ENCODE measurements at regions of chrX and their contacts with region 1.

Region 1: DNA sequence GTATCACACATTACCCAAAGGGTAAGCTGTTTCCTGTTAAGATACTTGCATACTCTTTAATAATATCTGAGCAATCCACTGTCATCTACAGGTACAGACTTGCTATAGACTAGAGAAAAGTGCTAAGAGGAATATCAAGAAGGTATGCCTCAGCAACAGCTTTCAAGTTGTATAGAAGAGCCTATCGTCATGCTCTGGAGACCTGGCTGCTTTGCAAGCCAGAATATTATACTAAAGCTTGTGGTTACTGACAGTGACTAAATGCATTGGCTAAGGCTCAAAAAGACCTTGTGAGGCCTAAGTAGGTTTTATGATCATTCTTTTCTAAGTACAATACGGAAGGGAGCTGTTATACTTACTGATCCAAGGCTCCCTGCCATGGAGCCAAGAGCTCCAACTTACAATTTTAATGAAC is 11.3 kb downstream of the LAMP2 start:
- DNase-seq: peak in 1 of 2 donors; percentile 30
- ATAC-seq: peak; percentile 53 to 77 (median 74)
- H3K4me3 ChIP-seq: no peak overlapping the region
- H3K4me3 Mint-ChIP-seq: peak overlapping the region; percentile 73
- H3K27ac ChIP-seq: no peak overlapping the region
- H3K27ac Mint-ChIP-seq: peak overlapping the region; percentile 54 to 73
- H3K4me1 ChIP-seq: peaks cover 8% of the 10 kb centered on the region
- H3K4me1 Mint-ChIP-seq: peaks cover 28 to 31% of the 10 kb centered on the region in 2 donors
- H3K27me3 ChIP-seq: no peaks in the 10 kb centered on the region
- H3K27me3 Mint-ChIP-seq: no peaks in the 10 kb centered on the region
- CTCF ChIP-seq: no peak

Region 2: DNA sequence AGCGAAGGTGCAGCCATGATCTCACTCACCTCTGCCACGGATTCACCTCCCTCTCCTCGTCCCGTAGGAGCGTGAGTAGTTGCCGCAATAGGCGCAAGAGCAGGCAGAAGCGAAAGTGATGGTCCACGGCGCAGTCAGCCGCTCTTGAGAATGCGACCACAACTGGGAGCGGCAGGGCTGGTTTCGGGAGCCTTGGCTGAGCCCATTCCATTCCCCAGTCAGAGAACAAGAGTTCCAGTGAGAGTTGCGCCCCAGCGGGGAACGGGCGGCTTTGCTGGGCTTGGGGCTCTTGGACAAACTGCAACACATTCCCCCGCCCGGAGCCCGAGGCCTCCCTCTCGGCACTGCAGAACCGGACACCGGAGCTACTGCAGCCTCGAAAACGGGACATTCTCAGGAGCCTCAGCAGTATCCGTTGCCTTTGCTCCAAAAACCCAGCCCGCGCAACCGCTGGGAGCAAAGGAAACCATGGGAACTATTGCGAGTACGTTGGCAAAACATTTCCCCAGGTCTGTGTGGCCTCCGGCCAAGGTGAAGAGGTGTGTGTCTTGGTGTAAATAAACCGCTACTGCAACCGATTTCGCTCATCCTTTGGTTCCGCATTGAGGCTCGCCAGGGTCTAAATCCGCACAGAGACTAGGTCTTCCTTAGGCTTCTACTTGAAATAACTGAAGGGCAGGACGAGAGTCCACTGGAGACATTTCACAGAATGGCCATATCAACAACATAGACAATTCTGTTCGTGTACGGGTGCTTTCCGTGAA is 212.9 kb before region 1 on chrX:
- intact Hi-C with region 1: loop called (anchors 10 kb)
- DNase-seq: peak; percentile 34 to 78
- ATAC-seq: peak; percentile 79 to 91 (median 88)
- H3K4me3 ChIP-seq: peak overlapping the region; percentile 83
- H3K4me3 Mint-ChIP-seq: peak overlapping the region; percentile 96
- H3K27ac ChIP-seq: peak overlapping the region; percentile 84
- H3K27ac Mint-ChIP-seq: peak overlapping the region; percentile 82 to 92
- H3K4me1 ChIP-seq: no peaks in the 10 kb centered on the region
- H3K4me1 Mint-ChIP-seq: peaks cover 9 to 23% of the 10 kb centered on the region in 2 donors
- H3K27me3 ChIP-seq: no peaks in the 10 kb centered on the region
- H3K27me3 Mint-ChIP-seq: peaks cover 0 to 22% of the 10 kb centered on the region in 2 donors
- CTCF ChIP-seq: no peak

Region 3: DNA sequence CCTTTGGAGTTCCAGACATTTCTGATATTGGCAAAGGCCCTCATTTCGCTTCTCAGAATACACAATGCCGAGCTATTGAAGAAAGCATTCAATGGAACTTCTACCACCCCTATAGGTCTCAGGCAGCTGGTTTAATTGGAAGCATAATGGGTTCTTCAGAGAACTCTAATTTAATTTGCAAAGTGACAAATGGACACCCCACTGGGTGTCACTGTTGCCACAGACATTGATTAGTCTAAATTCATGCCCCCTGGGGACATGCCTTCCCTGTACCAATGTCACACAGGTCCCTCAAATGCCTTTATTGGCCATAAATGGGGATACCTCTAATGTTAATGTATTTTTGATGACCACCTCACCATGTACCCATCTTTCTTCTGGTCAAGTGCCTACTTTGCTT is 123.6 kb before region 1 on chrX:
- intact Hi-C with region 1: no loop called
- DNase-seq: peak in 1 of 2 donors; percentile 4
- ATAC-seq: no peak
- H3K4me3 ChIP-seq: no peak overlapping the region
- H3K4me3 Mint-ChIP-seq: no peak overlapping the region
- H3K27ac ChIP-seq: no peak overlapping the region
- H3K27ac Mint-ChIP-seq: no peak overlapping the region
- H3K4me1 ChIP-seq: no peaks in the 10 kb centered on the region
- H3K4me1 Mint-ChIP-seq: no peaks in the 10 kb centered on the region
- H3K27me3 ChIP-seq: no peaks in the 10 kb centered on the region
- H3K27me3 Mint-ChIP-seq: peaks cover 4 to 11% of the 10 kb centered on the region in 2 donors
- CTCF ChIP-seq: no peak

Region 4: DNA sequence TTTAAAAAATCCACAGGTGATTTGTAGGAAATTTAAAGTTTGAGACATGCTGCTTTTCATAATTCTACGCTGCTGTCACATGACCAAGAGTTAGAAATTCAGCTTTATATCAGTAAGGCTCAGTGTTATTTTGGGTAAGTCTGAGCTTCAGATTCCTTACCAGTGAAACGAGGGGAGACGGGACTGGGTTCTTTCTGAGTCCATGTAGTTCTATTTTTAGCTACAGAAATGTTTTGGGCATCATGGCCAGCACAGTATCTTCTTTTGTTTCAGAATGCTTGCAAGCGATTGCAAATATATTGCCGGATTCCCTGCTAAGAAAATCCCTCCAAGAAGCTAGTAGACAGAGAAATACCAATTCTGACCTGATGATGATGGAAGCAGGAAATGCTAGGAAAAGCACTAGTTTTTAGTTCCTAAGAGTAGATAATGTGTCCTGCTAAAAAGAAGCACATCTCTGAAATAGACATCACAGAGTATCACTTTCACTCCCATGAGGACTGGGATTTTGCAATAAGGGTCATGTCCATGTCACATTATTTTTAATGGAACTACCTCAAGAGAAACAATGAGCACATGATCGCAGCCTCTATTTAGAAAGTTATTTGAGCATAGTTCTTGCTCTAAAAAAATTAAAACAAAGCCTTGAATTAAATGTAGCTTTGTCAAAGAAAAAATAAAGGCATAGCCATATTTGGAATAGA is 85.0 kb before region 1 on chrX:
- intact Hi-C with region 1: no loop called
- DNase-seq: no peak
- ATAC-seq: no peak
- H3K4me3 ChIP-seq: no peak overlapping the region
- H3K4me3 Mint-ChIP-seq: no peak overlapping the region
- H3K27ac ChIP-seq: no peak overlapping the region
- H3K27ac Mint-ChIP-seq: no peak overlapping the region
- H3K4me1 ChIP-seq: no peaks in the 10 kb centered on the region
- H3K4me1 Mint-ChIP-seq: no peaks in the 10 kb centered on the region
- H3K27me3 ChIP-seq: no peaks in the 10 kb centered on the region
- H3K27me3 Mint-ChIP-seq: peaks cover 0 to 19% of the 10 kb centered on the region in 2 donors
- CTCF ChIP-seq: no peak

Region 5: DNA sequence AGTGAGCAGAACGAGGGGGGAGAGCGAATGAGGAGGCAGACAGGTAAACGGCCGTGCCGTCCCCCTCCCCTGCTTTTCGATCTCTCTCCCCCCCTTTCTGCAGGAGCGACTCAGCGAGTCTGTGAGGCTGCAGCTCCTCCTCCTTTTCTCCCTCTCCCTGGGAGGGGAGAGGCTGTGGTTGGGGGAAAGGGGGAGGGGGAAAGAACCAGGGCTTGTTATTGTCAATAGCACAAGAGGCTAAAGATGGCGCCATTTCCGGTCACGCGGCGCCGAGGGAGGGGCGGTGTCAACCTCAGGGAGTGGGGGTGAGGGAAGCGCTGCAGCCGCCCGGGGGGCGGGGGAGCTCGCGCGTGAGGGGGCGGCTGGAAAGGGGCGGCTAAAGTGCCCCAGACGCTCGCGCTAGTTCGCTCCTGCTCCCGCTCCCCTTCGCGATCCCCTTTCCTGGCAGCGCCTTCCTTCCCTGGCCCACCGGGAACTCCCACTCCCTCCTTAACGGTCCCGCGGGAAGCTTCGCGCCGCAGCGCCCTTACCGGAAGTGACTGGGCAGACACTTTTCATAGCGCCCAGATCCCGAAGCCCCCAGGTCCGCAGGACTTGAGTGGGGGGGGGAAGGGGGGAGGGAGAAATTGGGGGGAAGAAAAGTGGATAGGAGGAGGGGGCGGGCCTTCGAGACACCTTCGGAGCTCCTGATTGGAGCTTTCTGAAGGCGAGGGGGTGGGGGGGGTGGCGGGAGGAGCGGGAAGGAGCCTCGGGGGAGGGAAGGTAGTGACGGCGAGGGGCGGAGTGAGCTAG is 103.3 kb after region 1 on chrX and contains the start of gene CUL4B:
- intact Hi-C with region 1: no loop called
- DNase-seq: peak; percentile 86 to 94
- ATAC-seq: peak; percentile 89 to 96 (median 92)
- H3K4me3 ChIP-seq: peak within 1 kb of the TSS; percentile 99
- H3K4me3 Mint-ChIP-seq: peak within 1 kb of the TSS; percentile 93
- H3K27ac ChIP-seq: peak within 1 kb of the TSS; percentile 100
- H3K27ac Mint-ChIP-seq: peak within 1 kb of the TSS; percentile 91
- H3K4me1 ChIP-seq: peaks cover 3% of the 10 kb centered on the region
- H3K4me1 Mint-ChIP-seq: peaks cover 13 to 28% of the 10 kb centered on the region in 2 donors
- H3K27me3 ChIP-seq: no peaks in the 10 kb centered on the region
- H3K27me3 Mint-ChIP-seq: no peaks in the 10 kb centered on the region
- CTCF ChIP-seq: no peak
- total RNA-seq, gene CUL4B: 32.6 to 42.3 (median 33.3) TPM